Endothelial cell of umbilical vein (primary cell): ENCODE measurements at regions of chr2 and their contacts with region 1.

Region 1: GRCh38 chr2:182980115-182980514 is 58.1 kb downstream of the NCKAP1 start:
- DNase-seq: peak; percentile 44
- H3K4me3 ChIP-seq: no peak overlapping the region
- H3K27ac ChIP-seq: no peak overlapping the region
- H3K4me1 ChIP-seq: no peaks in the 10 kb centered on the region
- H3K27me3 ChIP-seq: no peaks in the 10 kb centered on the region
- CTCF ChIP-seq: peak; percentile 7 to 9
- POLR2A ChIP-seq: no peak

Region 2: DNA sequence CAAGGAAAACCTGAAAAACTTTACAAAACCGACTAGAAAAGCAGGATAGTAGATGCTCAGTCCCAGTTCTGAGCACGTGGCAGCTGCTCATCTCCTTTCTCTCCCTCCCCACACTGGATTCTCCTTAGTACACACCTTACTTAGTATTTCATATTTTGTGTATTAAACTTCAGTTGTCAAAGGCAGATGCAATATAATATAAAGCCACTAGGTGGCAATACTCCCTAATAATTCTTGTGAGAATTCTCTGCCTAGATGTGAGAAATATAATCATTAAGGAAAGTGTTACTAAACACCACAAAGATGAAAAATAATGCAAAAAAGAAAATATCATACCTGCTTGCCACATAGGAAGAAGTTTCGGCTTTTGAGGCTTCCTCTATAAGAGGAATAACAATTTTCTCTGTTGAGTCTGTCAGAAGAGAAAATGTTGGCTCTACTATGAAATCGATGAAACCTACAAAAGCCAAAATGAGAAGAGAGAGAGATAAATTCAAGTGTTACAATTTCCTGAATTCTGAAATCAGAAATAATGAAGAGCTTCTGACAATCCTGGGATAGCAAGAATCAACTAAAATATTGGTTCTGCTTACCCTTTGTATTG is 793.9 kb before region 1 on chr2:
- CTCF ChIA-PET with region 1: interaction called, 10 read pairs
- POLR2A ChIA-PET with region 1: no interaction called
- dilution Hi-C with region 1: no loop called
- intact Hi-C with region 1: no loop called
- DNase-seq: peak; percentile 67
- H3K4me3 ChIP-seq: no peak overlapping the region
- H3K27ac ChIP-seq: no peak overlapping the region
- H3K4me1 ChIP-seq: no peaks in the 10 kb centered on the region
- H3K27me3 ChIP-seq: no peaks in the 10 kb centered on the region
- CTCF ChIP-seq: peak; percentile 25 to 32
- POLR2A ChIP-seq: no peak

Region 3: DNA sequence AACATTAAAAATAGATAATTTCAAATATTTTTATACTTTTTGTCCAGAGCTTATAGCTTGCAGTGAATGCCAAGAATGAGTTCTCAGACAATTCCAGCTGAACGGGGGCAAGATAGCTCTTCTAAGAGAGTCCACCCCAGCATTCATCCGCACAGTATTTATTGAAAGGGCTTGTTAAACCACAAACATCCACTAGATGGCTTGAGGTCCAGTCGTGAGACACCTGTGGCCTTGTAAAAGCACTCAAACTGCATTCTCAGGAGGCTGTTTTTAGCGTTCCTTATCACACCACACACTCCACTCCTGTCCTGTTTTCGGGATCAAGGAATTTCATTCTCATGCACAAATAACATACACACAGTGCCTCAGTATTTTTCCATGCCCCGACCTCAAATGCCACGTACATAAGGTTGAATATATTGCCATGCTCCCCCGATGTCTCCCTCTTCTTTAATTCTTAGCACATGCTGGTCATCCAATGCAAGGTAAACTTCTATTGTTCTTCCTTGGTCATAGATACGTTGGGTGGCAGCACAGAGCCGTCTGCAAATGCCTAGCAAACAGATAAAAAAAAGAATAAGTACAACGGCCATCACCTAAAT is 216.7 kb before region 1 on chr2:
- CTCF ChIA-PET with region 1: interaction called, 164 read pairs
- POLR2A ChIA-PET with region 1: no interaction called
- dilution Hi-C with region 1: no loop called
- intact Hi-C with region 1: loop called (anchors 2 kb)
- DNase-seq: peak; percentile 51
- H3K4me3 ChIP-seq: no peak overlapping the region
- H3K27ac ChIP-seq: no peak overlapping the region
- H3K4me1 ChIP-seq: no peaks in the 10 kb centered on the region
- H3K27me3 ChIP-seq: no peaks in the 10 kb centered on the region
- CTCF ChIP-seq: peak; percentile 43 to 51
- POLR2A ChIP-seq: no peak

Region 4: DNA sequence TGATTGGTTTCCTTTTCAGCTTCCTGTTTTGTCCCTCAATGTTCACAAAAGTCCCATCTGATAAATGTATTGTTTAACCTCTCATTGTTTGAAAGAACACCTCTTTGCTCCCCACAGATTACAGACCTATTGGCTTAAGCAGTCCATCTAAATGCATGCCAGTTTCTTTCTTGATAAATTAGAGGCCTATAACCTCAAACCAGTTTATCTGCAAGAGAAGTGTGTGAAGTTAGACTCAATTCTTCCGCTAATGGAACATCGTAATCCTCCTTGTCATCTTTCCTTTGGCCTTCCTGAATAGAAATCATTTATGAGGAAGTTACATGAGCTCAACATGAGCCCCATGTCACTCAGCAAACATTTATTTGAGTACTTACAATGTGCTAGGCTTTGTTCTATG is 187.7 kb before region 1 on chr2:
- CTCF ChIA-PET with region 1: interaction called, 10 read pairs
- POLR2A ChIA-PET with region 1: no interaction called
- dilution Hi-C with region 1: no loop called
- intact Hi-C with region 1: no loop called
- DNase-seq: peak; percentile 53
- H3K4me3 ChIP-seq: no peak overlapping the region
- H3K27ac ChIP-seq: no peak overlapping the region
- H3K4me1 ChIP-seq: peaks cover 8% of the 10 kb centered on the region
- H3K27me3 ChIP-seq: peaks cover 0 to 4% of the 10 kb centered on the region in 2 experiments
- CTCF ChIP-seq: no peak
- POLR2A ChIP-seq: no peak

Region 5: GRCh38 chr2:182824767-182825158 is 155.4 kb before region 1 on chr2:
- CTCF ChIA-PET with region 1: no interaction called
- POLR2A ChIA-PET with region 1: no interaction called
- dilution Hi-C with region 1: no loop called
- intact Hi-C with region 1: no loop called
- DNase-seq: no peak
- H3K4me3 ChIP-seq: no peak overlapping the region
- H3K27ac ChIP-seq: no peak overlapping the region
- H3K4me1 ChIP-seq: no peaks in the 10 kb centered on the region
- H3K27me3 ChIP-seq: peaks cover 3 to 7% of the 10 kb centered on the region in 2 experiments
- CTCF ChIP-seq: no peak
- POLR2A ChIP-seq: no peak

Region 6: GRCh38 chr2:182994228-182994912 is 14.3 kb after region 1 on chr2:
- CTCF ChIA-PET with region 1: interaction called, 19 read pairs
- POLR2A ChIA-PET with region 1: no interaction called
- dilution Hi-C with region 1: no loop called
- intact Hi-C with region 1: no loop called
- DNase-seq: no peak
- H3K4me3 ChIP-seq: no peak overlapping the region
- H3K27ac ChIP-seq: no peak overlapping the region
- H3K4me1 ChIP-seq: no peaks in the 10 kb centered on the region
- H3K27me3 ChIP-seq: no peaks in the 10 kb centered on the region
- CTCF ChIP-seq: no peak
- POLR2A ChIP-seq: no peak